Activated T-helper 1 cell treated with anti-CD3 and anti-CD28 coated beads, Interleukin-12 subunit alpha, Interleukin-12 subunit beta, Interleukin-2, Interleukin-4 antibody, amounts not matched to agents 30 ng/mL and 10 ng/mL and 1 ng/mL, durations not matched to agents 14 hours and 24 hours and 36 hours (primary cell): ENCODE measurements at regions of chr6 and their contacts with region 1.

Region 1: GRCh38 chr6:111973118-111973761 is 80.7 kb upstream of the CCN6 start:
- DNase-seq: peak; percentile 47
- H3K4me3 Mint-ChIP-seq: peak overlapping the region; percentile 53
- H3K27ac Mint-ChIP-seq: peak overlapping the region; percentile 87
- H3K4me1 Mint-ChIP-seq: peaks cover 55% of the 10 kb centered on the region
- H3K27me3 Mint-ChIP-seq: no peaks in the 10 kb centered on the region

Region 2: DNA sequence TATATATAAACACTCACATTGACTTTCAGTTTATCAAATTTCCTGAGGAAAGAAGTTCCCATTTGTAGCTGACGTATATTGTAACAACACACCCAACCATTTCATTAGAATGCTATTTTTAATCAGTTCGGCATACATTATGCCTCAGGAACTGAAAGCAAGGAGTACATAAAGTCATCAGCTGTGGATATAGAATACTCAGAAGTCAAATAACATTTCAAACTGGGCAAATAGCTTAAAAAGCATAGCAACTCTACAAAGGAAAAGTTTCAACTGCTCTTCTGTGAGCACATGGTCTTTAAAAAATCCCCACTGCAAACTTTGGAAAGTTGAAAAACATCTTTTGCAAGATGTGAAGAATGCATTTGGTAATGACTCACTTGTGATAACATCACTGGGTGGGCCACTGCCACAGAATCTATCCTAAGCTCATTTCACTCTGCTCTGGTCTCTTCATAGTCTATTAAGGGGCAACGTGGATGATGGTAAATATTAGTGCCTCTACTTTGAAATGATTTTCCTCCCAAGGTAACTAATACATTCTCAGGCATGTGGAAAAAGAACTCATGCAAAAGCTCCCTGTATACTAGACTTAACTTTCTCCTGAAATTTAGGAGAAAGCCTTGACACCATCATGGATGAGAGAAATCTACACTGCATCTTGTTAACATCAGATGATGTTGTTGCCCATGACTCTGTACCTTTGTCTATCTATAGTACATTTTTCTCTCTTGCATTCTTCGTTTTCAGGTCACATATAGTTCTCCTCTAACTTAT is 149.2 kb before region 1 on chr6:
- intact Hi-C with region 1: loop called (anchors 1 kb)
- DNase-seq: no peak
- H3K4me3 Mint-ChIP-seq: peak overlapping the region; percentile 72
- H3K27ac Mint-ChIP-seq: peak overlapping the region; percentile 89
- H3K4me1 Mint-ChIP-seq: peaks cover 81% of the 10 kb centered on the region
- H3K27me3 Mint-ChIP-seq: no peaks in the 10 kb centered on the region

Region 3: DNA sequence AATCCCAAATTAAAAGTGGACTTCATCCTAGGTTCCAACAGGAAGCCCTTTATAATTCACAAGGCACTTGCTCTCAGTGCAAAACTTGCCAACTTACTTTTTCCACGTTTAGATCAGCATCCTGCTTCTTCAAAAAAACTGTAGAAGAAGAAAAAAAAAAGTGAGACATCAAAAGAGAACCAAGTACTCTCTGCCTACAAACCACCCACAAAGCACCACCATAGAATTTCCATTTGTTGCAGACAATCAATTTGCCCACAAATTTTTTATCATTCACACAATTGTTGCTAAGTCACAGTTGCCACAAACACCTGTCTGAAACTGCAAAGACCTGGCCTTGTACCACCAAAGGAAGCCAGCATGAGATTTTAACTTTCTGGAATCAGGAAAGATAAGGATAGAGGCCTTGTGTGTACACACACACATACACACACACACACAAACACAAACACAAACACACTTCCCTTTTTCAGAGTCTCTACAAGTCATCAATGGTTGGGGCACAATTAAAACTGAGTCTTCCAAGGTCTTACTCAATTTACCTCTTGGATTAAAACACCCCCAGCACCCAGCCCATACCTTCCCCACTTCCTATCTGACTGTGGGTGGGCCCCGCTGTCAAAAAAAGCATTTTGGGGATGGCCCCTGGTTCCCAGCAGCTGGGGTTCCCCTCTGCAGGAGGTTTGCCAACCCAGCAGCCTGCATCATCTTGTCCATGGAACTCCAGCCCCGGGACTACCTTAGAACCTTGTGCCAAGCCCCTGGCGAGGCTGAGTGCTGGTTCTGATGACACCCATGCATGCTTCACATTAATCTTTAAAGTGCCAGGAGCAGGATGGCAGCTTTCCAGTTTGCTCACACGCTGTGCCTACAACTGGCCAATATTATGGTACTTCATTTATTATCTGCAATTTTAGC is 126.5 kb before region 1 on chr6:
- intact Hi-C with region 1: loop called (anchors 1 kb)
- DNase-seq: peak; percentile 35
- H3K4me3 Mint-ChIP-seq: peak overlapping the region; percentile 65
- H3K27ac Mint-ChIP-seq: no peak overlapping the region
- H3K4me1 Mint-ChIP-seq: peaks cover 30% of the 10 kb centered on the region
- H3K27me3 Mint-ChIP-seq: no peaks in the 10 kb centered on the region

Region 4: DNA sequence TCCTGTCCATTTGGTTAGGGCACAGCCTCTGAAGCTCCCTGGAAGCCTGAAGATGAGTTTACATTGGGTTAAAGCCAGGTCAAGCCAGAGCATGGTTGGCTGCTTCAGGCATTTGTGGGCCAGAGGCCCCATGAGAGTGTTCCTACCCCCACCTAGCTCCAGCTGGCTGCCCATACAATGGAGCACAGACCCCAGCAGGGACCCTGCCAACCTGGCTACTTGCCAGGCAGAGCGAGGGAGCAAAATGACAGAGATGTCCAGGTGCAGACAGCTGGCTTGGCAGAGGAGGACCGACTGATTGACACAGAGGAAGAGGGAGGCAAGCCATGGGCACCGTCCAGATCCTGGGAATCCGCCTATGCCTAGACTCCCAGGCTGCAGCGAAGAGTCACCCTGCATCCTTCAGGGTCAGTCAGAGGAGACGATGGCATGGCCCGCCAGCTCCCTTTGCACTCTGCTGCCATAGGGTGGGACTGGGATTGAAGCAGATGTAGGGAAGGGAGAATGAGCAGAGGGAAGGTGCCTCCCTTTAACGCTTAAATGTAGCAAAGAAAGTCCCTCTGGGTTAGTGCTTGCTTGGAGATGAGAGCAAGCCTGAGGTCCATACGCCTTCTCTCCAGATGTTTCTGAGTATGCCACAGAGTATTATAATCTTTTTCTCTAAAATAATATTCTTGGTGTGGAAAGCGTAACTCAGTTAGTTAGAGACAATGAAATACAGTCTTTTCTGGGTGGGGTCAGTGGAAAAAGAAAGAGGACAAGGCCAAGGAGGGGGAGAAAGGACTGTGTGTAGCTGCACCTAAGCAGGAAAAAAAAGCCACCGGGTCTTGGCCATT is 22.4 kb before region 1 on chr6:
- intact Hi-C with region 1: loop called (anchors 2 kb)
- DNase-seq: no peak
- H3K4me3 Mint-ChIP-seq: no peak overlapping the region
- H3K27ac Mint-ChIP-seq: no peak overlapping the region
- H3K4me1 Mint-ChIP-seq: peaks cover 5% of the 10 kb centered on the region
- H3K27me3 Mint-ChIP-seq: peaks cover 12% of the 10 kb centered on the region

Region 5: DNA sequence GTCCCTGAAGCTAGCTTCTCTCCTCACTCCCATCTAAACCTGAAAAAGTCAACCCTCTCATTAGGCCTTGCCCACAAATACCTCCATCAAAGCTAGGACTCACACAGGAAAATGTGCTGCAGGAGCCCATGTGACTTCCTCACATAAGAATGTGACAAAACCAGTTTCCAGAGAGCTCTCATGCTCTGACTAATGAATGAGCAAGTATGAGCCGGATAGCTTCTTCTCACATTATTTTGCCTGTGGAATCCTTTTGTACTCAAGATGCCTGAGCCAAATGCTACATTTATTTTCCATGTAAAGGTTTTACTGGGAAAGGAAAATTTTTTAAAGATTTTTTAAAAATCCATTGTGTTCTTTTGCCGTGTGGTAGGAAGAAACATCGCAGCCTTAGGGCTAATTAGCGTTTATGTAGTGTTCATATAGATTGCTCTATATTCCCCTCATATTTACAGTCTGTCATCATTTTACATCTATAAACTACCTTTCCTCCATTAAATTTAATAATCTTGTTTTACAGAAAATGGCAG is 12.0 kb after region 1 on chr6:
- intact Hi-C with region 1: loop called (anchors 1 kb)
- DNase-seq: no peak
- H3K4me3 Mint-ChIP-seq: peak overlapping the region; percentile 5
- H3K27ac Mint-ChIP-seq: peak overlapping the region; percentile 78
- H3K4me1 Mint-ChIP-seq: peaks cover 71% of the 10 kb centered on the region
- H3K27me3 Mint-ChIP-seq: no peaks in the 10 kb centered on the region

Region 6: GRCh38 chr6:111997078-111997852 is 24.0 kb after region 1 on chr6:
- intact Hi-C with region 1: loop called (anchors 1 kb)
- DNase-seq: peak; percentile 68
- H3K4me3 Mint-ChIP-seq: peak overlapping the region; percentile 45
- H3K27ac Mint-ChIP-seq: peak overlapping the region; percentile 46
- H3K4me1 Mint-ChIP-seq: peaks cover 46% of the 10 kb centered on the region
- H3K27me3 Mint-ChIP-seq: no peaks in the 10 kb centered on the region

Region 7: DNA sequence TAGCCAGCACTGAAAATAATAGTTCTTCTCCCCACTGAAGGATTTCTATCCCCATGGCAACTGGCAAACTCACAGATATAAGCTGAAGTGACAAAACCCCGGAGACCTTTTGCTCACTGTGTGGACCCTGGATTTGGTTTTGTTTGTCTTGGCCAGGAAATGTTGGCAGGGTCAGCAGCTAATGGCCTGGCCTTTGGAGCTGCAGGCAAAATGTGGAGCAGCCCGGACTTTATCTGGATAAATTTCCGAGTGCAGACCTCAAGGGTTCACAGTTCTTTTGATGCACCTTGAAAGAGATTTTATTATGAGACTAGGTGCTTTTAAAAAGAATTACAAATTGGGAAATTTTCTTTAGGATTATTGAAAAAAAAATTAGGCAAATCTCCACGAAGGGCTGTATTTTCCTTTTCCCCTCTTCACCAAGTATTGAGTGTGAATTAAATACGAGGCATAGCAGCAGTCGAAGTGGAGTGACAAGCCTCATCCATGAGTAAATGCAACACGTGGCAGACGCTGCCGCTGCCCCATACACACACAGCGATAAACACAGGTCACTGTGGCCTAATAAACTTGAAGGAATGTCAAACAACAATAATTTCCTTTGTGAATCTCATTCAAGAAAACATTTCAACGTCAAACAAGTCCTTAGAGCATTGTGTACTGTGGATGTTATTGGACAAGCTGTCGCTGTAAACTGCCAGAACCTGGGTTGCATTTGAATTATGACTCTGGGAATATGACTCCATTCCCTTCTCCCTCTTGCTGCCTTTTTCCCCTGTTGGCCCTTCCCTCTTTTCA is 45.6 kb after region 1 on chr6:
- intact Hi-C with region 1: loop called (anchors 1 kb)
- DNase-seq: no peak
- H3K4me3 Mint-ChIP-seq: no peak overlapping the region
- H3K27ac Mint-ChIP-seq: no peak overlapping the region
- H3K4me1 Mint-ChIP-seq: peaks cover 50% of the 10 kb centered on the region
- H3K27me3 Mint-ChIP-seq: no peaks in the 10 kb centered on the region